ENCODE measurements at regions of chr2 and their contacts with region 1.

Region 1: DNA sequence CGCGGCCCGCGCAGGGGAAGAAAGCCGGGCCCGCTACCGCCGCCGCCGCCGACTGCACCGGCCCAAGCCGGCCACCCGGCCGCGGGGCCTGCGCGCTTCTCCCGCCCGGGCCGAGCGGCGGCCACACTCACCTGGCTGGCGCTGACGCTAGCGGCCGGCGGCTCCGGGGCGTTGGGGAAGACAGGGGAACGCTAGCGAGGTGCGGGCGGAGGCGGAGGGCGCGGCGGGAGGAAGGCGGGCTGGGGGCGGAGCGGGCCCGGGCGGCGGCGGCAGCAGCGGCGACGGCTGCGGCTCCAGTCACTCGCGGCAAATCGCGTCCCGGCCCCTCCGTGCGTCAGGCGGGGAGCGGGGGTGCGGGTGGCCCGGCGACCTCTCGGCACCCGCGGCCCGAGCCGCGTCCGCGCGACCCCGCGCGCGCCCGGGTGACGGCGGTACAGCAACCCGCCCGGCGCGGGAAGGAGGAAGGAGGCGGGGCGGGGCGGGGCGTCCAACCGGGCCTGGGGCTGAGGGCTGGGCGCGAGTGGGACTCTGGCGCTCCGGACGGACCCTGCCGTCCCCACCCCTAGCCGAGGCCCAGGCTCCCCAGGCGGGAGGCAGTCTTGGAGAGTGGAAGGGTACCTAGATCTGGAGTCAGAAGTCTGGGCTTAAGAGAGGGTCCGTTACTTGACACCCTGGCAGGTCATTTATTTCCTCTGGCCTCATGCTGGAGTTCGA is at the start of gene SESTD1:
- DNase-seq: peak in 1 of 2 experiments; percentile 83
- H3K4me3 ChIP-seq: peak within 1 kb of the TSS; percentile 95
- H3K27ac ChIP-seq: peak within 1 kb of the TSS; percentile 42
- H3K4me1 ChIP-seq: peaks cover 74% of the 10 kb centered on the region
- H3K27me3 ChIP-seq: no peaks in the 10 kb centered on the region
- CTCF ChIP-seq: no peak
- total RNA-seq, gene SESTD1: 208 and 279 TPM in 2 replicates

Region 2: DNA sequence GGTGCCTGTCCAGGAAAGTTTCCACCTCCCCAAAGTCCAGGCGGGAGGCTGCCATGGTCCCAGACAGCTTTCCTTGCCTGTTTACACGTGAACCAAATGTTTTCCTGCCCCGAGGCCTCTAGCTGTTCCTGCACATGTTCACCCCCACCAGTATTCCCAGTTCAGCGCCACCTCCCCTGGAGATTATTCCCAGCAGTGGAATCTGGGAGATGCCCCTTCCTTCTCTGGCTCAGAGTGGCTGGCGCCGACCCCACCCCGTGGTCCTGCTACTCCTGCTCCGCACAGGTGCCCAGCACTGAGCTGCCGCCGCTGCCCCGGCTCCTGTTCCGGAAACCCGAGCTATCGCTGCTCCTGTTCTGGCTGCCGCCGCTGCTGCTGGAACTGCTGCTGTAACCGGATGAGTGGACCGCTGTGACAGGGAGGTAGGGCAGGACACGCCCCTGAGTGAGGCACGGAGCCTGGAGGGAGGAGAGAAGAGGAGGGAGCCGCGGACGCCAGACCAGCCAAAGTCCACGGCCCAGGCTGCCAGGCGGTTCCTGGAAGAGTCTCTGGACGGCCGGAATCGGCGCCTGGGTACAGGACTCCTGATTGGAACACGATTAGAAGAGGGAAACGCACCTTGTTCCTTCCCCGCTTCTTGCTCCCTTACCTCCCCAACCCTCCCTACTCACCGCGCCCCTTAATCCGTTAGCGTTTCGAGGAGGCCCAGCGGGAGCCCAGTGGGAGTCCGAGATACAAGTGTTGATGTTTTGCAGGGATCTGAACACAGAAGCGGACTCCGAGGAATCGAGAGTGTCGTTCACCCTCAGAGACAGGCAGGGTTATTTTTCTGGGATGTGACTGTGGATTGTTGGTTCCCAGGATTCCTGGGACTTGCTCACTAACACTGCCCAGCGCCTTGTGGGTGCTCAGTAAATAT is 1191.9 kb before region 1 on chr2 and contains the start of gene PDE11A:
- CTCF ChIA-PET with region 1: no interaction called
- POLR2A ChIA-PET with region 1: no interaction called
- intact Hi-C with region 1: loop called (anchors 10 kb)
- DNase-seq: peak; percentile 85 to 94
- H3K4me3 ChIP-seq: peak within 1 kb of the TSS; percentile 64
- H3K27ac ChIP-seq: no peak within 1 kb of the TSS
- H3K4me1 ChIP-seq: peaks cover 27% of the 10 kb centered on the region
- H3K27me3 ChIP-seq: no peaks in the 10 kb centered on the region
- CTCF ChIP-seq: no peak
- total RNA-seq, gene PDE11A: 1.1 and 1.4 TPM in 2 replicates

Region 3: DNA sequence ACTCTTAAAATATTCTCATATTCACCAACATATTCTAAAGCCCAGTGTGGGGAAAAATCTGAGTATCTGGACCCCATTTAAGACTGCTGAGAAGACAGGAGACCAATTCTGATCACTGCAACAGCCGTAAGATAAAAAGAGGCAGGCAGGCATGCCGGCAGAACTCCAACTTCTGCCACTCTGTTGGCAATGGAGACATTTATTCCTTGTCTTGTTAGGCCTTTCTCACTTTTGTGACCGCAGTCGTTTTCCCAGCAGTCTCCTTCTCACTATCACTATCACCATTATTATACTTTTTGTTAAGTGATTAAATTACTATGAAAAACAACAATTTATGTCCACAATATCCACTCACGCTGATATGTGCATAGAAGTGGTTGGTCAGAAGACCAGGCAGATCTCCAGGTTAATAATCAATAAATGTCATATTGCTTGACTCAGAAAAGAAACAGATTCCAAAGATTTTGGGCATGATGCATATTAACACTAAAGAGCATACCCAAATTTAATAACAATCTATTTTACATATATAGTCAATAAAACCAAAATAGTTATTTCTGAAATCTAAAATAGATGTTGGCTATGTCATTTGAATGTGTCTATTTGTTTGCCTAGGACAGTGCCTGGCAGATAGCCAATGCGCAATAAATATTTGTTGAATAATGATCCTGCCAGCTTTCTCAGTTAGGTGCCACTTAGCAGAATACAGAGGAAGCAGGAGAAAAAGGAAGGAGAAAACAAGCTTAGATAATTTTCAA is 38.1 kb before region 1 on chr2:
- CTCF ChIA-PET with region 1: no interaction called
- POLR2A ChIA-PET with region 1: no interaction called
- intact Hi-C with region 1: no loop called
- DNase-seq: no peak
- H3K4me3 ChIP-seq: no peak overlapping the region
- H3K27ac ChIP-seq: no peak overlapping the region
- H3K4me1 ChIP-seq: no peaks in the 10 kb centered on the region
- H3K27me3 ChIP-seq: no peaks in the 10 kb centered on the region
- CTCF ChIP-seq: no peak

Region 4: GRCh38 chr2:179239195-179239594 is 25.3 kb before region 1 on chr2:
- CTCF ChIA-PET with region 1: interaction called, 8 read pairs
- POLR2A ChIA-PET with region 1: interaction called, 13 read pairs
- intact Hi-C with region 1: loop called (anchors 1 kb)
- DNase-seq: peak in 1 of 2 experiments; percentile 84
- H3K4me3 ChIP-seq: peak overlapping the region; percentile 31; the same call in 1 of the 2 replicates
- H3K27ac ChIP-seq: peak overlapping the region; percentile 50
- H3K4me1 ChIP-seq: peaks cover 54% of the 10 kb centered on the region
- H3K27me3 ChIP-seq: no peaks in the 10 kb centered on the region
- CTCF ChIP-seq: no peak

Region 5: GRCh38 chr2:179340668-179341067 is 76.1 kb after region 1 on chr2:
- CTCF ChIA-PET with region 1: interaction called, 9 read pairs
- POLR2A ChIA-PET with region 1: interaction called, 4 read pairs
- intact Hi-C with region 1: loop called (anchors 1 kb)
- DNase-seq: peak in 1 of 2 experiments; percentile 35
- H3K4me3 ChIP-seq: no peak overlapping the region
- H3K27ac ChIP-seq: no peak overlapping the region
- H3K4me1 ChIP-seq: peaks cover 22% of the 10 kb centered on the region
- H3K27me3 ChIP-seq: no peaks in the 10 kb centered on the region
- CTCF ChIP-seq: peak; percentile 72

Region 6: DNA sequence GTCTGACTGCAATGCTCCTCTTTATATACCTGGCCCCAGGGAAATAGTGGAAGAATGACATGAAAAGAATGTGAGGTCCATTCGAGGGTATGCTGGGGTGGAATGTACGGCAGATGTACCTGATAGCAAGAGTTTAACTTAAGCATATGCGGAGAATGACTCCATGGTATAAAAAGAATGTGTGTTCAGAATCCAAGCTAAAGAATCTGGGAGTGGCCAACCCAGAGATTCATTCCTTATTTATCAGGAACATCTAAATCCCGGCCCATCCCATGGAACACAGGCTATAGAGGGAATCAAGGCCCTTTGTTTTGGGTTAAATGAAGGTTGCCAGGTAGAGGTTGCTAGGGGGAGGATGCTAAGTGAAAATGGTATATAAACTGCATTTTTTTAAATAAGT is 446.9 kb after region 1 on chr2:
- CTCF ChIA-PET with region 1: no interaction called
- POLR2A ChIA-PET with region 1: no interaction called
- intact Hi-C with region 1: loop called (anchors 1 kb)
- DNase-seq: peak; percentile 59 to 80
- H3K4me3 ChIP-seq: no peak overlapping the region
- H3K27ac ChIP-seq: no peak overlapping the region
- H3K4me1 ChIP-seq: no peaks in the 10 kb centered on the region; the same call in 1 of the 2 replicates
- H3K27me3 ChIP-seq: no peaks in the 10 kb centered on the region
- CTCF ChIP-seq: no peak

Region 7: DNA sequence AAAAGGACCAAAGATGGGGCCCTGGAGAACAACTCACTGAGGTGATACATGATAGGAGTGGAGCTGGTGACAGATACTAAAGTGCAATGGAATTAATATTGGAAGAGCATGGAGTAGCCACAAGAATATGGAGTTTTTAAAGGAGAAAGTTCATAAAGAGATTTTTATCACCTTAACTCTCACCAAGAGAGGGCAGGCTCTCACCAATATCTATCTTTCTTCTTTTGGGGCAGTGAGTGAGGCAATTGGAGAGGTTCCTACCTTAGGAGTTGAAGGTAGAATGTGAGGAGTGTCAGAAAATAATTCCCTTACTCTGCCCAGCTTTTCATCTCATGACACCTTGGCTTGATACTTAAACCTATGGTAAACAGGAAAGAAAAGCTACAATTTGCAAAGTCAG is 976.2 kb after region 1 on chr2:
- CTCF ChIA-PET with region 1: no interaction called
- POLR2A ChIA-PET with region 1: no interaction called
- intact Hi-C with region 1: no loop called
- DNase-seq: peak in 1 of 2 experiments; percentile 52
- H3K4me3 ChIP-seq: no peak overlapping the region
- H3K27ac ChIP-seq: no peak overlapping the region
- H3K4me1 ChIP-seq: no peaks in the 10 kb centered on the region
- H3K27me3 ChIP-seq: no peaks in the 10 kb centered on the region
- CTCF ChIP-seq: peak; percentile 59

Region 8: GRCh38 chr2:180823546-180824141 is 1559.1 kb after region 1 on chr2:
- CTCF ChIA-PET with region 1: no interaction called
- POLR2A ChIA-PET with region 1: no interaction called
- intact Hi-C with region 1: no loop called
- DNase-seq: no peak
- H3K4me3 ChIP-seq: no peak overlapping the region
- H3K27ac ChIP-seq: no peak overlapping the region
- H3K4me1 ChIP-seq: no peaks in the 10 kb centered on the region
- H3K27me3 ChIP-seq: no peaks in the 10 kb centered on the region
- CTCF ChIP-seq: no peak